Activated CD8-positive, alpha-beta T cell treated with anti-CD3 and anti-CD28 coated beads for 36 hours (primary cell): ENCODE measurements at regions of chr17 and their contacts with region 1.

Region 1: DNA sequence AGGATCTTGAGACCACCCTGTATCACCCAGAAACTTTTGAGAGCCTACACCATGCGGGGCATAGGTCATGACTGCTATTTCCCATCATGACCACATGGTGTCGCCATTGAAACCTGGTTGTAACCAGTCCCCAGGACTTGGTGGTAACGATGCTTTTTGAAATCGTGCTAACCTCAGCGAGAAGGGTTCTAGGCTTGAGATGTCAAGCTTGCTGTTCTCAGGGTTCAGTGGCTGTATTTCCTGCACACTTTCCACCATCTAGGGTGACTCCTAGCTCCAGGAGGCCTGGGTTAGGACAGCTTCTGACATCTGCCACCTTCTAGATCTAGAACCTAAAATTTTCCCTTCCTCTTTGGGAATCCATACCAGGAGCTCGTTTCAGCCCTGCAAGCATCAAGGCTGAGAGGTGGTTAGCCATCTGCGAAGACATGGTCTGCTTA is 13.0 kb upstream of the SPNS3 start:
- DNase-seq: peak; percentile 74
- ATAC-seq: peak; percentile 99
- H3K4me3 Mint-ChIP-seq: no peak overlapping the region
- H3K27ac Mint-ChIP-seq: no peak overlapping the region
- H3K4me1 Mint-ChIP-seq: no peaks in the 10 kb centered on the region
- H3K27me3 Mint-ChIP-seq: no peaks in the 10 kb centered on the region
- CTCF ChIP-seq: peak; percentile 69

Region 2: GRCh38 chr17:4407851-4408250 is 12.9 kb before region 1 on chr17:
- CTCF ChIA-PET with region 1: interaction called, 10 read pairs
- POLR2A ChIA-PET with region 1: no interaction called
- intact Hi-C with region 1: no loop called
- DNase-seq: no peak
- ATAC-seq: no peak
- H3K4me3 Mint-ChIP-seq: no peak overlapping the region
- H3K27ac Mint-ChIP-seq: no peak overlapping the region
- H3K4me1 Mint-ChIP-seq: peaks cover 1% of the 10 kb centered on the region
- H3K27me3 Mint-ChIP-seq: no peaks in the 10 kb centered on the region
- CTCF ChIP-seq: no peak

Region 3: DNA sequence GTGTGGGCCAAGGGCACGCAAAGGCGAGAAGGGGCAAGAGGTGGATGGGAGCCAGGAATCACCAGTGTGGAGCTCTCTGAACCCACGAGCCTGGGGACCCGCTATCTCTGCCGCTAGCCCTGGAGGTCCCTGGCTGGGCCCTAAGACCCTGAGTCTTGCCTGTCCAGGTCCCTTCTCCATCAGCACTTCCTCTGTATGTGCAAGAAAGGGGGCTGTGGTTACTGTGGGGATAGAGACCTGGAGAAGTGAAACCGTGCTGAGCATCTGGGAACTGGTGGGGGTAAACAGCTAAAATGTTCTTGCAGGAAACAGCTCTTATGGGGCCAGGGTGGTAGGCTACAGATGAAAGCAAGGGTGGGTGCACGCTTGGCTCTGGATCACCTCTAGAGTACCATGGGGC is 16.1 kb after region 1 on chr17:
- CTCF ChIA-PET with region 1: interaction called, 16 read pairs
- POLR2A ChIA-PET with region 1: interaction called, 3 read pairs
- intact Hi-C with region 1: no loop called
- DNase-seq: no peak
- ATAC-seq: no peak
- H3K4me3 Mint-ChIP-seq: peak overlapping the region; percentile 35
- H3K27ac Mint-ChIP-seq: peak overlapping the region; percentile 32
- H3K4me1 Mint-ChIP-seq: peaks cover 33% of the 10 kb centered on the region
- H3K27me3 Mint-ChIP-seq: no peaks in the 10 kb centered on the region
- CTCF ChIP-seq: no peak

Region 4: DNA sequence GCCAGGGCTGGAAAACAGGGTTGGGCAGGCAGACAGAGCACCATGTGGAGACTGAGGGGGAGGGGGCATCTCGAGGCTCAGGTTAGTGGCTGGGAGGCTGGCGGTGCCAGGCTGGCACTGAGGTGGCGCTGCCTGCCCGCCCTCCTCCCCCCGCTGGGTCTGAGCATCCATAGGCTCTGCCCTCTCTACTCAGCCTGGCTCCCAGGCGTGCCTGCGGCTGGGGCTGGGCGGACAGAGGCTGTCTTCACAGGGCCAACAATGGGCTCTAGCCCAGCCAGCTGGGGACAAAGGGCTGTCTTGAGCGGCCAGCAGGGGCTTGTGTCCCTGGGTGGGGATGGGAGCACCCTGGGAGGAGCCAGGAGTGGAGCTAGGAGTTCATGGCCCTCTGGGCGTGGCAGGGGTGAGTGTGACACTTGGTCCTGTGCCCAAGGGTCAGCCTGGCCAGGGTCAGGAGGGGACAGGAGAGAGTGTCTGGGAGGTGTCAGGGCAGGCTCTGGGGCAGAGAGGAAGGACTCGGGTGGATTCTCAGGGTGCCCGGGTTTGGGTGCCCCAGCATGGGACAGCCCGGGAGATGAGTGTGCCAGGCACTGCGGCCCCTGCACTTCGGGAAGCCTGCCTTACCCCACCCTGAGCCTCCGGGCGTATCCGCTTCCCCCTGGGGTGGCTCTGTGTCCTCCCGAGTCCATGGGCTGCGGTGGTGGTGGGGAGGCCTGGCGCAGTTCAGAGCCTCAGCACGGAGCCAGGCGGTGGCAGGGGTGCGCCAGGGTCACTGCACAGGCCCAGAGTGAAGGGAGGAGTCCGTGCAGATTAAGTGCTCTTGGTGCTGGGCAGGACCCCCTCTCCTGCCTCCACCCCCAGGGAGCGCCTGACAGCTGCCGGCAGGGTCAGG is 113.6 kb after region 1 on chr17:
- CTCF ChIA-PET with region 1: no interaction called
- POLR2A ChIA-PET with region 1: no interaction called
- intact Hi-C with region 1: loop called (anchors 10 kb)
- DNase-seq: no peak
- ATAC-seq: no peak
- H3K4me3 Mint-ChIP-seq: no peak overlapping the region
- H3K27ac Mint-ChIP-seq: no peak overlapping the region
- H3K4me1 Mint-ChIP-seq: peaks cover 2% of the 10 kb centered on the region
- H3K27me3 Mint-ChIP-seq: peaks cover 1% of the 10 kb centered on the region
- CTCF ChIP-seq: no peak

Region 5: DNA sequence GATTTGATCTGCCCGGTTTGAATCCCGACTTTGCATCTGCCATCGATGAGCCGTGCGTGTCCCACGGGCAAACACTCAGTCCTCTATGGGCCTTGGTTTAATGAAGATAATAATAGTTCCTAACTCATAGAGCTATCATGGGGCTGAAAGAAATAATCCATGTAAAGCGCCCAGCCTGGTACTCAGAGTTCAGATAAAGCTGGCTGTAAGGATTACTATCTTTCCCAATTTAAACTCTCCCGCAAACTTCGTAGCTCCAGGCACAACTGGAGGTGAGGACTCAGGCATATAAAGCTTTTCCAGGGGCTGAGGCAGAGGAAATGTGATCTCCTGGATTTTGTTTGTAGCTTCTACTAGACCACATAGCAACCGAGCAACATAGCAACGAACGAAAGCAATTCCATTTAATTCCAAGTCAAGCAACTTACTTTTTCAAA is 204.5 kb after region 1 on chr17:
- CTCF ChIA-PET with region 1: interaction called, 12 read pairs
- POLR2A ChIA-PET with region 1: no interaction called
- intact Hi-C with region 1: no loop called
- DNase-seq: no peak
- ATAC-seq: no peak
- H3K4me3 Mint-ChIP-seq: no peak overlapping the region
- H3K27ac Mint-ChIP-seq: no peak overlapping the region
- H3K4me1 Mint-ChIP-seq: no peaks in the 10 kb centered on the region
- H3K27me3 Mint-ChIP-seq: peaks cover 6% of the 10 kb centered on the region
- CTCF ChIP-seq: no peak